Activated T-helper 1 cell treated with anti-CD3 and anti-CD28 coated beads, Interleukin-12 subunit alpha, Interleukin-12 subunit beta, Interleukin-2, Interleukin-4 antibody, amounts not matched to agents 30 ng/mL and 10 ng/mL and 1 ng/mL, durations not matched to agents 14 hours and 24 hours and 36 hours (primary cell): ENCODE measurements at regions of chr2 and their contacts with region 1.

Region 1: GRCh38 chr2:168490015-168490874 is 34.2 kb downstream of the CERS6 start:
- DNase-seq: peak; percentile 45
- H3K4me3 Mint-ChIP-seq: peak overlapping the region; percentile 78
- H3K27ac Mint-ChIP-seq: peak overlapping the region; percentile 92
- H3K4me1 Mint-ChIP-seq: peaks cover 42% of the 10 kb centered on the region
- H3K27me3 Mint-ChIP-seq: peaks cover 9% of the 10 kb centered on the region

Region 2: GRCh38 chr2:168194784-168195522 is 295.3 kb before region 1 on chr2:
- intact Hi-C with region 1: loop called (anchors 1 kb)
- DNase-seq: peak; percentile 27
- H3K4me3 Mint-ChIP-seq: peak overlapping the region; percentile 64
- H3K27ac Mint-ChIP-seq: peak overlapping the region; percentile 91
- H3K4me1 Mint-ChIP-seq: peaks cover 56% of the 10 kb centered on the region
- H3K27me3 Mint-ChIP-seq: no peaks in the 10 kb centered on the region

Region 3: DNA sequence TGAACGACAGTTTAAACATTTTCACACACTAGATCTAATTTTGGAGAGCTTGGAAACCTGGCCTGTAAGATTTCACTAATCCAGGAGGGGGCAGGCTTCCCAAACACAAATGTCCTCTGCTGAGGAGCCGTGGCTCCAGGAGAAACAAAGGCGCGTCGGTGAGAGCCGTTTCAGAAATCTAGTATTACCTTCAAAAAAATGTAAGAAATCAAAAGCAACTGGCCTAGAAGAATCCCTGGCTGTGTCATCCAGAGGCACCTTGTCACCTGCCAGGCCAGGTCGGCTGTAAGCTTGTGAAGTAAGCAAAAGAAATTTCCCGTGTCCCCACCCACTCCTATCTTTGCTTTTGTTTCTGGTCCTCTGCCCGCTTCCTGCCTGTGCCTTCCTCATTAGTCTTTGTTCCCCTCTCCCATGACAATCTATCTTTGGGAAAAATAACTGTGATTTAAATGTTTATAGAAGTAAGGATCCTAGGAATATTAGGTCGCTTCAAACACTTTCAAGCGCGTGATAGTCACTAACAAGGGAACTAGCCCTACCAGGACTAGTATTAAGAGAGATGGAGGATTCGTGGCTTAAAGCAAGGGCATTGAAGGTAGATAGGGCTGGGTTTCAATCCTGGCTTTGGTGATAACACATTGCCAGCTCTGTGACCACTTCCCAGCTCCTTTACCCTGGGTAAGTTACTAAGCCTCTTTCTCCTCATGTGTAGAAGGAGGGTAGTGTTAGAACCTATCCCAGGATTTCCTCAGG is 143.3 kb before region 1 on chr2:
- intact Hi-C with region 1: loop called (anchors 2 kb)
- DNase-seq: peak; percentile 43
- H3K4me3 Mint-ChIP-seq: peak overlapping the region; percentile 72
- H3K27ac Mint-ChIP-seq: no peak overlapping the region
- H3K4me1 Mint-ChIP-seq: peaks cover 9% of the 10 kb centered on the region
- H3K27me3 Mint-ChIP-seq: peaks cover 19% of the 10 kb centered on the region

Region 4: GRCh38 chr2:168455648-168456520 is 34.4 kb before region 1 on chr2 and contains the start of gene CERS6:
- intact Hi-C with region 1: loop called (anchors 1 kb)
- DNase-seq: peak; percentile 85
- H3K4me3 Mint-ChIP-seq: peak within 1 kb of the TSS; percentile 93
- H3K27ac Mint-ChIP-seq: peak within 1 kb of the TSS; percentile 80
- H3K4me1 Mint-ChIP-seq: peaks cover 37% of the 10 kb centered on the region
- H3K27me3 Mint-ChIP-seq: peaks cover 3% of the 10 kb centered on the region
- total RNA-seq, gene CERS6: 27.0 and 27.1 TPM in 2 replicates

Region 5: DNA sequence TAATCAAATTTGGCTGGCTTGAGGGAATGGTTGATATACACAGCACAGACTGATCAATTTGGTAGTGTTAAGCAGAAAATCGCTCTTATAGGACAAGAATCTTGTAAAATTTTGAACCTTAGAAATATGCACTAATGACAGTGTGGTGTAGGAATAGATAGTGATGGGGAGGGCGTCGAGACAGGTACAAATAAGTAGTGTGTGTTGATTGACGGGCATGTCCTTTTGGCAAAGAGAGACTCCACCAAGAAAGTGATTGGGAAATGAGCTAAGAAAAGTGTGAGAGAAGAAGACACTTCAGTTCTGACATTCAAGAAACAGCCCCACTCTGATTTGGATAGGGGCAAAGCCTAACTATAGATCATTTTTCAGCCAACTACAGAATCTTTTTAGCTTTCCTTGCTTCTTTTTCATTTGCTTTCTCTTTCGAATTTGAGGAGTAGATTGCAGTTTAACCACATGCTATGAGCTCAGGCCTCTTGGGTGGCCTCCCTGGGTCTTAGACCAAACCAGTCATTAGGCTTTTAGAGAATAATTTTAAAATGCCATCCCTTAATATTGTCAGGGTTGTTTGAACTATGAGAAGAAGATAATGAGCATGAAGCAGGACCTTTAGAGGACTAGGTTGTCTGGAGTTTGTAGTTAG is 92.9 kb after region 1 on chr2:
- intact Hi-C with region 1: loop called (anchors 1 kb)
- DNase-seq: no peak
- H3K4me3 Mint-ChIP-seq: peak overlapping the region; percentile 34
- H3K27ac Mint-ChIP-seq: peak overlapping the region; percentile 25
- H3K4me1 Mint-ChIP-seq: peaks cover 46% of the 10 kb centered on the region
- H3K27me3 Mint-ChIP-seq: no peaks in the 10 kb centered on the region

Region 6: GRCh38 chr2:168687314-168687713 is 197.1 kb after region 1 on chr2:
- intact Hi-C with region 1: loop called (anchors 1 kb)
- DNase-seq: no peak
- H3K4me3 Mint-ChIP-seq: no peak overlapping the region
- H3K27ac Mint-ChIP-seq: no peak overlapping the region
- H3K4me1 Mint-ChIP-seq: peaks cover 15% of the 10 kb centered on the region
- H3K27me3 Mint-ChIP-seq: no peaks in the 10 kb centered on the region

Region 7: GRCh38 chr2:168890006-168890782 is 399.9 kb after region 1 on chr2 and contains the start of gene SPC25:
- intact Hi-C with region 1: no loop called
- DNase-seq: peak; percentile 87
- H3K4me3 Mint-ChIP-seq: peak within 1 kb of the TSS; percentile 98
- H3K27ac Mint-ChIP-seq: peak within 1 kb of the TSS; percentile 92
- H3K4me1 Mint-ChIP-seq: peaks cover 32% of the 10 kb centered on the region
- H3K27me3 Mint-ChIP-seq: peaks cover 21% of the 10 kb centered on the region
- total RNA-seq, gene SPC25: 17.9 and 19.9 TPM in 2 replicates

Region 8: DNA sequence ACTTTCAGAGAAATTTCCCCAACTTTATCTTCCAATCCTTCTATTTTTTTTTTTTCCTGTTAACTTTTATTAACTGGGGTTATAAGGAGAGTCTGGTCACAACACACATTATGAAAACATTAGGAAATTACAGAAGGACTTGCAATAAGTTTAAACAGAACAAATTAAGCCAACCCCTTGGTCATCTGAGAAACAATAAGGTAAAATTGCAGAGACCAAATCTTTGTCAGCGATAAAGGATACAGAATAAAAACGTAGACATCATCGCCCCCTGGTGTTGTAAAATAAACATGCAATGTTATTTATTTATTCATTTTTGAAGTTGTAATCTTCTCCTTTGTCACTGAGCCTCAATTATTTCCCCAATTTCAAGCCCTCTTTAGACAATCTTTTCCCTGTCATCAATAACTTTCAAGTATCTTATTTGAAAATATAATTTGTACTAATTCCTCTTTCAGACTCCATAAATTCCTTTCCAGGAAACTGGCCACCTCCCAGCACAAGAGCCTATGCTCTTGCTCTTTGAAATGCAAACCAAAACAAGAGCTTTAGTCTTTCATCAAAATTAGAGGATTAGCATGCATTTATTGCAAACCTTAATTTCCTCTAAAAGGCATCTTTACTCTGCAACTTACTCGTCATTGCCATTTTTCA is 430.4 kb after region 1 on chr2:
- intact Hi-C with region 1: loop called (anchors 2 kb)
- DNase-seq: no peak
- H3K4me3 Mint-ChIP-seq: no peak overlapping the region
- H3K27ac Mint-ChIP-seq: no peak overlapping the region
- H3K4me1 Mint-ChIP-seq: peaks cover 7% of the 10 kb centered on the region
- H3K27me3 Mint-ChIP-seq: peaks cover 19% of the 10 kb centered on the region